ENCODE measurements at regions of chr1 and their contacts with region 1.

Region 1: DNA sequence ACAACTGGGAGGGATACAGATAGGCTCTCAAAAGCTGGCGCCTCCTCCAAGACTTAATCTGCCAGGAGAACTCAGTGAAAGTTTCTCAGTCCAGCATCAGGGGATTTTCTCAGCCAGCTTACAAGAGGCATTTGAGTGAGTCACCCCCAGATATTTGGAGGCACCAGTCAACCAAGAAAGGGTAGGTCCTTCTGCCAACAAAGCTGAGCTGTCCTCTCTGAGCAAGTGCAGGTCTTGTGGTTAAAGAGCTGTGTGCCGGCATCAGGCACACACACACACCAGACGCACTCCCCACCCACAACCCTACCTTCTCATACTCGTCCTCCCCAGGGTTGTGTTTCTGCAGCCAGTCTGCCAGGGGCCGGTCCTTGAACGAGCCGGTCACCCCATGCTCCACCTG is 27.0 kb upstream of the PPP1R15B start:
- DNase-seq: peak; percentile 99
- H3K4me3 Mint-ChIP-seq: peak overlapping the region; percentile 6
- H3K27ac Mint-ChIP-seq: peak overlapping the region; percentile 94
- H3K4me1 Mint-ChIP-seq: peaks cover 65% of the 10 kb centered on the region
- H3K27me3 Mint-ChIP-seq: no peaks in the 10 kb centered on the region
- CTCF ChIP-seq: no peak

Region 2: DNA sequence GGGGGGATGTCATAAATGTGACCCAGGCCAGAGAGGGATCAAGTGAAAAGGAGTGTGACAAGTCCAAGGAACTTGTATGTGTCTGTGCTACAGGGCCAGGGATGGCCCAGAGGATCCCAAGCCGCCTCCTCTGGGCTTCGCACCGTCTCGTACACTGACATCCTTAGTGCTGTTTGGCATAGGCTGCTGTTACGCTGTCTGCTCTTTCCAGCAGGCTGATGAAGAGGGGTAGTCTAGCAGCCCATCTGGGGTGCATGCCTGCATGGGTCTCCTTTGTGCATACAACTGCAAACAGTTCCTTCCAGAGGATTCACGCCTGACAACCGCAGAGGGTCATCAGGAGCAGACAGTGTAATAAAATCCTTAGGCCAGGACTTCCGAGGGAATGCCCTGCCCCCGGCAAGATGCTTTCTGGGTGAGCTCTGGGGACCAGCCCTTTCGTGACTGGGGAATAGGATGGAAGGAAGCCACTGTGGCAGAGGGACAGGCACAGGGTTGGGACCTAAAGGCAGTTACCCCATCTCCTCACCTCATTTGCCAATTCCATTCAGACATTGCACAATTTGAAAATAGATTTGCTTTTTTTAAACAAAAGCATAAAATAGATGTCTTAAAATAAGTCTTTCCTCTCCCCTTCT is 218.5 kb before region 1 on chr1:
- CTCF ChIA-PET with region 1: no interaction called
- POLR2A ChIA-PET with region 1: no interaction called
- intact Hi-C with region 1: no loop called
- DNase-seq: no peak
- H3K4me3 Mint-ChIP-seq: no peak overlapping the region
- H3K27ac Mint-ChIP-seq: no peak overlapping the region
- H3K4me1 Mint-ChIP-seq: no peaks in the 10 kb centered on the region
- H3K27me3 Mint-ChIP-seq: no peaks in the 10 kb centered on the region
- CTCF ChIP-seq: no peak

Region 3: DNA sequence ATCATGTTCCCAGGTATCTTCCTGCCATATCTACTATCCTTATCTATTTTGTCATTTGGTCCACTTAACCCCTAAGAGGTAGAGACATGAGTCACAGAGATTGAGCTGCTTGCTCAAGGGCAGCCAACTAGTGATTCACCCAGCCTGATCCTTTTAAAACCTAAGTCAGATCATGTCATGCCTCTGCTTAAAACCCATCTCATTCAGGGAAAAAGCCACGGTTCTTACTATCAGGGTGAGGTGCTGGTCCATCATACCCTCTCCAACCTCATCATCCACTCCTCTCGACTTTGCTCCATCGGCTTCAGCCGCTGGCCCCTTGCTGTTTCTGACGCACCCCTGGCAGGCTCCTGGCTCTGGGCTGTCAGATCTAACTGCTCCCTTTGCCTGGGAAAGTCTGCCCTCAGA is 12.6 kb before region 1 on chr1:
- CTCF ChIA-PET with region 1: interaction called, 214 read pairs
- POLR2A ChIA-PET with region 1: interaction called, 25 read pairs
- intact Hi-C with region 1: no loop called
- DNase-seq: peak; percentile 86
- H3K4me3 Mint-ChIP-seq: no peak overlapping the region
- H3K27ac Mint-ChIP-seq: peak overlapping the region; percentile 1
- H3K4me1 Mint-ChIP-seq: peaks cover 19% of the 10 kb centered on the region
- H3K27me3 Mint-ChIP-seq: no peaks in the 10 kb centered on the region
- CTCF ChIP-seq: no peak

Region 4: GRCh38 chr1:204453141-204453772 is 14.6 kb after region 1 on chr1:
- CTCF ChIA-PET with region 1: interaction called, 11 read pairs
- POLR2A ChIA-PET with region 1: interaction called, 7 read pairs
- intact Hi-C with region 1: no loop called
- DNase-seq: no peak
- H3K4me3 Mint-ChIP-seq: no peak overlapping the region
- H3K27ac Mint-ChIP-seq: no peak overlapping the region
- H3K4me1 Mint-ChIP-seq: peaks cover 21% of the 10 kb centered on the region
- H3K27me3 Mint-ChIP-seq: no peaks in the 10 kb centered on the region
- CTCF ChIP-seq: no peak

Region 5: DNA sequence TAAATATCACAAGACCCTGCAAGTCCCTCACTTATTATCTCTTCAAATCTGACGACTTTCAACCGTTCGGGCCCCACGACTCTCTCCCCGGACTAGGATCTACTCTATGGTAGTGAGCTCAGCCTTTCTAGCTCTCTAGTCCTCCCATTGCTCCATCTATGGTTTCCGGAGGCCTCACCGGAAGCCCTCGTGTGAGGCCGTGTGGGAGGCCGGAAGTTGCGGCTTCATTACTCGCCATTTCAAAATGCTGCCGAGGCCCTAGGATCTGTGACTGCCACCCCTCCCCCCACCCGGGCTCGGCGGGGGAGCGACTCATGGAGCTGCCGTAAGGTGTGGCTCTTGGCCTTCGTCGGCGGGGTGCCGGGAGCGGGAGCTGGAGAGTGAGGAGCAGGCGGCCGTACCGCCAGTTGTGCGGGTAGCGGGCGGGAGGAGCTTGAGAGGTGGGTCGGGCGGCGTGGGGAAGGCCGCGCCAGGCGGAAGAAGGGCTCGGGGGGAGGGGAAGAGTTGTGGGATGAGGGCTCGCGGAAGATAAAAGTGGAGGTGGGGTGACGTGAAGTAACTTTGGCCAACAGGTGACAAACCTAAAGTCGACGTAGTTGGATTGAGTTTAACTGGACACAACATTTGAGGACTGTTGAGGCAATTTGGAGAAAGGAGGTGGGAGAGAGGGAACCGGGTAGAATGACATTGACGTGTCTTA is 77.7 kb after region 1 on chr1 and contains the start of gene MDM4:
- CTCF ChIA-PET with region 1: no interaction called
- POLR2A ChIA-PET with region 1: interaction called, 15 read pairs
- intact Hi-C with region 1: no loop called
- DNase-seq: peak; percentile 100
- H3K4me3 Mint-ChIP-seq: no peak within 1 kb of the TSS
- H3K27ac Mint-ChIP-seq: no peak within 1 kb of the TSS
- H3K4me1 Mint-ChIP-seq: peaks cover 12% of the 10 kb centered on the region
- H3K27me3 Mint-ChIP-seq: no peaks in the 10 kb centered on the region
- CTCF ChIP-seq: no peak
- total RNA-seq, gene MDM4: 162 and 174 TPM in 2 replicates

Region 6: DNA sequence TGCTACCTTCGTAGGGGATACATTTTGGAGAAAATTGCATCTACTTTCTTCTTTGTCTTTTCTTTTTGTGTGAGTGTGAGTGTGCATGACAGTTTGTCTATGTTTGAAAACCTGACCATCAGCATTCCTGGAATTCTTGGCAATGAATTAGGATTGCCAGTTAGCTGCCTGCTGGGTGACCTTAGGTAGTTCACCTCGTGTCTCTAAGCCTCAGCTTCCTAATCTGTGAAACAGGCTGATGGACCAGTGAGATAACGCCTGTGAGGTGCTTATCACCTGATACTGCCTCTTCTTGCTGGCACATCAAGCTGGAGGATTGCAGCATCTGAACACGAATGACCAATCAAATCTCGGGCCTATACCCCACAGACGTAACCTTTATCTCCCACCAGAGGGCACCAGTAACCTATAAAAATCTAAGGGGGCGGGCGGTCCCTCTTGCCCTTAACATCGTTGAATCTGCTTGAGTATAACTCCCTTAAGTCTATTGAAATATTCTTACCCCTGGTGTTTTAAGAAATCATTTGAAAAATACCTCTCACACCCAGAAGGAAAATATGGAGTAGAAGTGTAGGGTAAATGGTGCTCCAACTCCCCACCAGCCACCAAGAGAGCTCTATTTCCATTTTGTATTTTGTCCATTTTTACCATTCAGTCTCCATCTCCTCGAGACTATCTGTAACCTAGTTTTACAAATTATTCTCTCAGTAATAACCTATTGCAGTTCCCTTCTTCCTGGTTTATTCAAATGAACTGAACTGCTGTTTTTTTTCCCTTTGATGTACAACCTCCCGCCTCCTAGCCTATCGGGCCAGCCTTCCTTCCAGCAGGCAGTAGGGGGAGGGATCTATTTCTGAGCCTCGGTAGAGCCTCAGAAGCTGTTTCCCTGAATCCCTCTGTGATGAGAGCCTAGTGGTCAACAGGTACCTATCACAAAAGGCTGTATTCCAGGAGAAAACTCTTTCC is 127.3 kb after region 1 on chr1:
- CTCF ChIA-PET with region 1: no interaction called
- POLR2A ChIA-PET with region 1: no interaction called
- intact Hi-C with region 1: no loop called
- DNase-seq: peak; percentile 91
- H3K4me3 Mint-ChIP-seq: no peak overlapping the region
- H3K27ac Mint-ChIP-seq: no peak overlapping the region
- H3K4me1 Mint-ChIP-seq: peaks cover 9% of the 10 kb centered on the region
- H3K27me3 Mint-ChIP-seq: no peaks in the 10 kb centered on the region
- CTCF ChIP-seq: peak; percentile 95

Region 7: DNA sequence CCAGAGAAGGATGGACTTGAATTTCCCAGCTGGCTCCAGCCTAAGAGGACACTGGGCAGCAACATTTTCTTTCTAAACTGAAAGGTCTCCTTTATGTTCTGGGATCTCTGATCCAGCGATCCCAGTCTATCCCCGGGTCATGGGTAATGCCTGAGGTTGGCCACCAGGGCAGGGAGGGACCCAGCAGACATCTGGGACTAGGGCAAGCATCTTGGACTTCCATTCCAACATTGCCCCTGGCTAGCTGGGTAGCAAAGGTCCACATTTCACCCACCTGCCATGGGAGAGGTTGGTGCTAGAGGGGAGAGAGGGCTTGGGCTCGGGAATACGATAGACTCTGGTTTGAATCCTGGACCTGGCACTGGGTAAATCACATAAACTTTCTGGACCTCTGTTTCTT is 162.3 kb after region 1 on chr1:
- CTCF ChIA-PET with region 1: no interaction called
- POLR2A ChIA-PET with region 1: no interaction called
- intact Hi-C with region 1: no loop called
- DNase-seq: peak; percentile 20
- H3K4me3 Mint-ChIP-seq: no peak overlapping the region
- H3K27ac Mint-ChIP-seq: no peak overlapping the region
- H3K4me1 Mint-ChIP-seq: no peaks in the 10 kb centered on the region
- H3K27me3 Mint-ChIP-seq: peaks cover 38% of the 10 kb centered on the region
- CTCF ChIP-seq: peak; percentile 30

Region 8: DNA sequence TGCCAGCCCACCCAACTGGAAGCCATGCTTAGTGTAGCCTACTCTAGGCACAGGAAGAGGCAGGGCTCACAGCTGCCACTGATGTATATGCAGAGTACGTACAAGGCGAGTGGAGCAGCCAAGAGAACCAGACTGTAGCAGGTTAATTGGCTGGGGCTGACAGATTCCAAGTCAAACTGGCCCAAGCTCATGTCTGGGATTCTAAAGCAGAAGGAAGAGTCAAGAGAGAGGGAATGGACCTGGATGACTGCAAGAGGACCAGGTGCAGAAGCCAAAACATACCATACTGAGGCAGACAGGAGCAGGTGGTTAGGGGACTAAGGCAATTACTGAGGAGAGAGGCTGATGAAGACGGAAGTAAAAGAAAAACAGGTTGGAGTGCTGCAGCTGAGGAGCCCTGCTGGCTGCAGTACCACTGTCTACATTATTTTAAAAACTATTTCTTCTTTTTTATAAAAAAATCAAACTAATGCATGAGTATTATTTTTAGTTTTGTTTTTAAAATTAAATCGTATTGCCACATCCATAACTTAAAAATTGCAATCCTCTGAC is 298.3 kb after region 1 on chr1:
- CTCF ChIA-PET with region 1: no interaction called
- POLR2A ChIA-PET with region 1: no interaction called
- intact Hi-C with region 1: no loop called
- DNase-seq: no peak
- H3K4me3 Mint-ChIP-seq: no peak overlapping the region
- H3K27ac Mint-ChIP-seq: no peak overlapping the region
- H3K4me1 Mint-ChIP-seq: no peaks in the 10 kb centered on the region
- H3K27me3 Mint-ChIP-seq: peaks cover 91% of the 10 kb centered on the region
- CTCF ChIP-seq: no peak

Measured in MCF 10A (cell line).